Activated T-helper 1 cell treated with anti-CD3 and anti-CD28 coated beads, Interleukin-12 subunit alpha, Interleukin-12 subunit beta, Interleukin-2, Interleukin-4 antibody, amounts not matched to agents 30 ng/mL and 10 ng/mL and 1 ng/mL, durations not matched to agents 14 hours and 24 hours and 36 hours (primary cell): ENCODE measurements at regions of chr3 and their contacts with region 1.

Region 1: DNA sequence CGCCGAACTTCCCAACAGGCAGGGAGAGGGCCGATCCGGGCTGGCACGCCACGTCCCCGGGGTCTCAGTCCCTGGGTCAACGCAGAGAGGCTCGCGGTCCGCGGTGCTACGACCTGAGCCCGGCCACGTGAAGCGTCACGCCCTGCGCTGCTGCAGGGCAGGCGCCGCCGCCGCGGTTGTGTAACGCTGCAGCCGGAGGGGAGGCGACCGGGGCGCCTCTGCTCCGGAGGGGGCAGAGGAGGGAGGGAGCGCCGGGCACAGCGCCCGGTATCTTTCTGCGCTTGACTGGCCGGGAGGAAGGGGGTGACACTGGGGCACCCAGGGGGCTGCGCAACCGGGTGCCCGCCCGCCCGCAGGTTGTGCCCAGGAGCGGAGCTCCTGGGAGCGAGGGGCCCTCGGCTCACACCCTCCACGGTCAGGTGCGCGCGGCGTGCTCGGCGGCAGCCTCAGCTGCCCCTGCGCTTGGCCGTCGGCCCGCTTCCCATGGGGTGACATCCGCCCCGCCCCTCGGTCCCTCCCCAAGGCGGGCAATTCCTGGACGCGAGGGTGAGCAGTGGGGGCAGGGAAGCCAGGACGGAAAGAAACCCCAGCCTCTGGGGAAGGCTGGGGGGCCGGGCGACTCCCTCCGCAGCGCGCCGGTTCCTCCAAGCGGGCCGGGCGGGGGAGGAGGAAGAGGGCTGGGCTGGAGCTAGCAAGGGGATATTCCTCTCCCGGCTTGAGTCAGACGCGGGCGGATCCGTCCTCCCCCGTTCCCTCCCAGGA is 852 bp upstream of the BHLHE40 start:
- DNase-seq: peak; percentile 89
- H3K4me3 Mint-ChIP-seq: peak overlapping the region; percentile 91
- H3K27ac Mint-ChIP-seq: peak overlapping the region; percentile 100
- H3K4me1 Mint-ChIP-seq: peaks cover 36% of the 10 kb centered on the region
- H3K27me3 Mint-ChIP-seq: no peaks in the 10 kb centered on the region

Region 2: DNA sequence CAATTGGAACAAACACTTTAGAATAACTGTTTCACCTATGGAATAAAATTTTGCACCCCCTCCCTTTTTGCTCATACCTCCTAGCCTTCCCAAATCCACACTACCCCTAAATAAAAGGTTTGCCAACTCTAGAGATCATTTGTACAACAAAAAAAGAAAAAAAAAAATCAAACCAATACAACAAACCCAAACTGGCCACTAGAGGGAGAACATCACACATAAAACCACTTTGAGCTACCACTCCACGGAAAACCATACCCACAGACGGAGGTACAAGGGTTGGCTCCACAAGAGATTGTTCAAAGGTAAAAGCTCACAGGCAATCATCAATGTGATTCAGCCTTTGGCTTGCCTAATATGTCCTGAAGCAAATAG is 627.6 kb before region 1 on chr3:
- intact Hi-C with region 1: loop called (anchors 1 kb)
- DNase-seq: peak; percentile 37
- H3K4me3 Mint-ChIP-seq: peak overlapping the region; percentile 9
- H3K27ac Mint-ChIP-seq: peak overlapping the region; percentile 31
- H3K4me1 Mint-ChIP-seq: peaks cover 20% of the 10 kb centered on the region
- H3K27me3 Mint-ChIP-seq: peaks cover 4% of the 10 kb centered on the region

Region 3: GRCh38 chr3:4722103-4722502 is 256.3 kb before region 1 on chr3:
- intact Hi-C with region 1: loop called (anchors 1 kb)
- DNase-seq: no peak
- H3K4me3 Mint-ChIP-seq: no peak overlapping the region
- H3K27ac Mint-ChIP-seq: peak overlapping the region; percentile 90
- H3K4me1 Mint-ChIP-seq: peaks cover 78% of the 10 kb centered on the region
- H3K27me3 Mint-ChIP-seq: no peaks in the 10 kb centered on the region

Region 4: GRCh38 chr3:4821975-4822374 is 156.4 kb before region 1 on chr3:
- intact Hi-C with region 1: loop called (anchors 1 kb)
- DNase-seq: peak; percentile 82
- H3K4me3 Mint-ChIP-seq: peak overlapping the region; percentile 86
- H3K27ac Mint-ChIP-seq: peak overlapping the region; percentile 100
- H3K4me1 Mint-ChIP-seq: peaks cover 98% of the 10 kb centered on the region
- H3K27me3 Mint-ChIP-seq: no peaks in the 10 kb centered on the region

Region 5: GRCh38 chr3:4906107-4906621 is 72.2 kb before region 1 on chr3:
- intact Hi-C with region 1: loop called (anchors 1 kb)
- DNase-seq: no peak
- H3K4me3 Mint-ChIP-seq: peak overlapping the region; percentile 64
- H3K27ac Mint-ChIP-seq: peak overlapping the region; percentile 94
- H3K4me1 Mint-ChIP-seq: peaks cover 90% of the 10 kb centered on the region
- H3K27me3 Mint-ChIP-seq: no peaks in the 10 kb centered on the region

Region 6: GRCh38 chr3:5057857-5058324 is 79.5 kb after region 1 on chr3:
- intact Hi-C with region 1: loop called (anchors 1 kb)
- DNase-seq: peak; percentile 69
- H3K4me3 Mint-ChIP-seq: peak overlapping the region; percentile 23
- H3K27ac Mint-ChIP-seq: peak overlapping the region; percentile 53
- H3K4me1 Mint-ChIP-seq: peaks cover 52% of the 10 kb centered on the region
- H3K27me3 Mint-ChIP-seq: no peaks in the 10 kb centered on the region